Dendritic cell treated with granulocyte-macrophage colony-stimulating factor and Interleukin-4, amounts not matched to agents 40 ng/mL and 50 ng/mL, for 4 days (primary cell): ENCODE measurements at regions of chr17 and their contacts with region 1.

Region 1: GRCh38 chr17:29699283-29699682 is 76.6 kb upstream of the CORO6 start:
- H3K4me3 Mint-ChIP-seq: no peak overlapping the region
- H3K27ac Mint-ChIP-seq: peak overlapping the region; percentile 53
- H3K4me1 Mint-ChIP-seq: peaks cover 28% of the 10 kb centered on the region
- H3K27me3 Mint-ChIP-seq: no peaks in the 10 kb centered on the region

Region 2: DNA sequence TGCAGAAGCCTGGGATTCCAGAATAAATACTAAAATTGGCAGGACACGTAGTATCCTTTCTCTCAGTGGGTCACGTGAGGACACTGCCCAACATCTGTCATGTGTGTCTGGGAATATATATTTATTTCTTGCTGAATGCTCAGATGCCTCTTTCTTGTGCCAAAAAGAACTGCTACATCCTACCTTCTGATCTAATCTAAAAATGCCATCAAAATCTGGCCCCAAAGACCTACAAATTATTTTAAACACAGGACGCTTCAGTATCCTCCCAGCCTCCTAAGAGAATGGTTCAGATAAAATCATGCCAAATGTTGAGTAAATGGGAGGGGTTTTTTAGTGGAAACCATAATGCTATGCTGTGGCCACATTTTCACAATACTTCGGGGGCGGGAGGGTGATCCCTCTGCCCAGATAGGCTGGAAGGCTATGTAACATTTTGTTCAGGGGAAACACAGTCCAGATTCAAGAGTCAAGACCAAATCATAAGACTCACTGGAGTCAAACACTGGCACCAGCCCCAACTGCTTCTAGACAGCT is 53.7 kb before region 1 on chr17:
- intact Hi-C with region 1: no loop called
- H3K4me3 Mint-ChIP-seq: no peak overlapping the region
- H3K27ac Mint-ChIP-seq: peak overlapping the region; percentile 41
- H3K4me1 Mint-ChIP-seq: peaks cover 38% of the 10 kb centered on the region
- H3K27me3 Mint-ChIP-seq: no peaks in the 10 kb centered on the region

Region 3: DNA sequence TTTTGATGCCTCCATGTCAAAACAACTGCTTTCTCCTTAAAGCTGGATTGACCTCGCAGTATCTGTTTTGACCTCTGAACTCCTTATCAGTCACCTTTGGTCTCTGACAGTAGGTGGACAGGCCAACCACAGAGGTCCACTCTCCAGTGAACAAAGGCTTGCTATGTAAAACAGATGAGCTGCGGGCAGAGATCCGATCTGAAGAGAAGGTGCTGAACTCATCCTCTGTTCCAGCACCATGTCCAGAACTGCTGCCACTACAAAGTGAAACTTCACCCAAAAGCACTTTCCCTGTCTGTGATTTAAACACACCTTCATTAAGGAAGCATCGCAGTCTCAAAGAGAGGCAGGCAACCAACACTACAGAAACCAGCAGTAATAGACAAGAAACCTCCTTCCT is 40.7 kb after region 1 on chr17:
- intact Hi-C with region 1: loop called (anchors 5 kb)
- H3K4me3 Mint-ChIP-seq: no peak overlapping the region
- H3K27ac Mint-ChIP-seq: peak overlapping the region; percentile 30
- H3K4me1 Mint-ChIP-seq: peaks cover 31% of the 10 kb centered on the region
- H3K27me3 Mint-ChIP-seq: no peaks in the 10 kb centered on the region

Region 4: DNA sequence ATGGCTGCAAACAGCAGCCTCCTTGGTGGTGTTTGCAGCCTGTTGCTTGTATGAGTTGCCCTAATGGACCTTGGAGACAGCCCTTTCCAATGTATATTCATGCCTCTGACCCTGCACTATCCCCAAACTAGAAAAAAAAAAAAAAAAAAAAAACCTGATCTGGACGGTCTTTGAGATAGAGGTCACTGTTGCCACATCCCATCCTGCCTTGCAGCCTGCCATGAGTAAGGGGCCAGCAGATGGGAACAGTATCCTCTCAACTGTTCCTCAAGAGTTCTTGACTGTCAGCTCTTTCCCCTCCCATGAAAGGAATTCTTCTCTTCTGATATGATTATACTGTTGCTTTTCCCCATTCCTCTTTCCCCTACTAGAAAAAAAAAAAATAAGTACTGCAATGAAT is 78.4 kb after region 1 on chr17:
- intact Hi-C with region 1: no loop called
- H3K4me3 Mint-ChIP-seq: no peak overlapping the region
- H3K27ac Mint-ChIP-seq: no peak overlapping the region
- H3K4me1 Mint-ChIP-seq: peaks cover 6% of the 10 kb centered on the region
- H3K27me3 Mint-ChIP-seq: no peaks in the 10 kb centered on the region

Region 5: DNA sequence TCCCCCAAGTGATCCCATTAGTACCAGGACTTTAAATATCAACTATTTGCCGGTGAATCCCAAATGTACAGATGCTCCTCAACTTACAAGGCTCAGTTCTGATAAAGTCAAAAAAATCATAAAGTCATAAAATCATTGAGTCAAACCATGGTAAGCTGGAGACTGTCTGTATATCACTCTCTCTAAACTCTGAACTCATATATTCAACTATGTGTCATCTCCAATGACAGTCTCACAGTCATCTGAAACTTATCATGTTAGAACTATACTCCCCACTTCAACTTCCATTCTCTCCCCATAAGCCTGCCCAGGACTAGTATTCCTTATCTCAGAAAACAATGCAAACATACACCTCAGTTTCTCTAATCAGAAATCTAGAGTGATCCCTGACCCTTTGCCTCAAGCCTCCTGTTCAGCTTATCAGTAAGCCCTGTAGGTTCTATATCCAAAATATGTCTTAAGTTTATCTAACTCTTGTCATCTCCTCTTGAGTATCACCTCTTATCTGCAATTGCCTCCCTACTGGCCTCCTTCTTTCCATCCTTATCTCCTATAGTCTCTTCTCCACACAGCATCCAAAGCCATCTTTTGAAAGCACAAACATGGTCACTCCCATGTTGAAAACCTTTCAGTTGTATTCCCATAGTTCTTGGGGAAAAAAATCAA is 175.8 kb after region 1 on chr17:
- intact Hi-C with region 1: no loop called
- H3K4me3 Mint-ChIP-seq: no peak overlapping the region
- H3K27ac Mint-ChIP-seq: no peak overlapping the region
- H3K4me1 Mint-ChIP-seq: peaks cover 18% of the 10 kb centered on the region
- H3K27me3 Mint-ChIP-seq: no peaks in the 10 kb centered on the region